ENCODE measurements at regions of chr12 and their contacts with region 1.

Region 1: DNA sequence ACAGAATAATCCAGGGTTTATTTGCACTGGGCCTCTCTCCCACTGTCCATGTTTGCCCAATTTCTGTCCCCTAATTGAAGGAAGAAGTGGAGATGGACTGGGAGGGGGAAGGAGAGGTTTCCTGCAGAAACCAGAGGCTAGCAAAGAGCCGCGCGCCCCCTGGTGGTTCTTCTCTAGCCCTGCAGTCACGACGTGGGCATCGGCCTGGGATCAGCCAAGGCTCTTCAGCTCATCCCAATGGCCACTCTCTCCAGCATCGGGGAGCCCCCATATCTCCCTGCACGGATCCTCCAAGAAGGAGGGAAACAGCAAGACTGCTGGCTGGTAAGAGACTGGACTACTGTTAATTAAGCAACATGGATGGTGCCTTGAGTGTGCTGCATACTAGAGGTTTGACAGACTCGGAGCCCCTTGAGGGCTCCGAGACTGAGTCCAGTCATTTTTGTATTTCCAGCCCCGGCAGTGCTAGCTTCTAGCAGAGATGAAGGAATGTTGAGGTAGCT is 18.7 kb downstream of the ZBTB39 start:
- DNase-seq: peak; percentile 55 to 91 (median 78)
- ATAC-seq: peak; percentile 85 to 97 (median 94)
- H3K4me3 ChIP-seq: no peak overlapping the region
- H3K27ac ChIP-seq: no peak overlapping the region
- H3K4me1 ChIP-seq: no peaks in the 10 kb centered on the region
- H3K27me3 ChIP-seq: no peaks in the 10 kb centered on the region
- CTCF ChIP-seq: peak; percentile 79 to 93 (median 92)

Region 2: DNA sequence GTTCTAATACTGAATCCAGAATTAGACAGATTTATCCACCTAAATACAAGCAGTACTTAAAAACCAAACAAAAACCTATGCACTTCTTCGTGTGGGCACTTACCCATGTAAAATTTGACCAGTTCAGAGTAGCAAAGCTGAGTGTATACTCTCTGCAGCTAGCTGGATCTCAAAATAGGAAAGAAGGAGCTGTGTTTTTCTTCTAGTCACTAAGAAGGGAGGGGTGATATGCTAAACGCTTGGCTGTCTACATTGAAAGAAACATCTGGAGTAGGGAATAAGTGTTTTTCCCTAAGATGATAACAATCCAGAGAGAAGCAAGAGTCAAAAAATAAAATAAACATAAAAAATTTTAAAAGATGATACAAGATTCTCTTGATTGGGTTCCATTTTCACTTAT is 446.0 kb before region 1 on chr12:
- intact Hi-C with region 1: no loop called
- DNase-seq: no peak
- ATAC-seq: no peak
- H3K4me3 ChIP-seq: no peak overlapping the region
- H3K27ac ChIP-seq: no peak overlapping the region
- H3K4me1 ChIP-seq: no peaks in the 10 kb centered on the region
- H3K27me3 ChIP-seq: no peaks in the 10 kb centered on the region
- CTCF ChIP-seq: no peak

Region 3: GRCh38 chr12:56759263-56759908 is 228.2 kb before region 1 on chr12:
- intact Hi-C with region 1: loop called in 2 of 3 experiments (anchors 5 kb)
- DNase-seq: no peak
- ATAC-seq: peak in 1 of 4 donors; percentile 31
- H3K4me3 ChIP-seq: no peak overlapping the region
- H3K27ac ChIP-seq: no peak overlapping the region
- H3K4me1 ChIP-seq: peaks cover 0 to 4% (median 0%) of the 10 kb centered on the region in 3 donors
- H3K27me3 ChIP-seq: no peaks in the 10 kb centered on the region
- CTCF ChIP-seq: no peak

Region 4: DNA sequence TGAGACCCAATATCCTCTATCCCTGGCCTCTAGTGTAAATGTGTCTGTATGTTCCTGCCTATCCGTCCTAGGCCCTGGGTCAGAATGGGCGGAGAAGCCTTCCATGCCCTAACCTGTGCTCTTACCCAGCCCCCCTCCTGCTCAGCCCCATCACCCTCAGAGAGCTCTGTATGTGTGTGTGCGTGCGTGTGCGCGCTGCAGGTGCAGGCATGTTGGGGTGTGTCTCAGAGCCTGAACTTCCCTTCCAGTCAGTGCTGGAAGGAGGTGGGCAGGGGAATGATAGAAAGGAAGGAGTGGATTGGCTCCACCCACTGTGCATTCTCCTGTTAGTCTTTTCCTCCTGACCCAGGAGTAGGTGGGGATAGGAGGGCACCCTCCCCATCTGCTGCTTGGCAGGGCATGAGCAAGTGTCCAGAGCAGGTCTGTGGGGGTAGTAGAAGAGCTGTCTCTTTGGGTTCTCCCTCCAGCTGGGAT is 108.5 kb after region 1 on chr12:
- intact Hi-C with region 1: no loop called
- DNase-seq: no peak
- ATAC-seq: no peak
- H3K4me3 ChIP-seq: no peak overlapping the region
- H3K27ac ChIP-seq: no peak overlapping the region
- H3K4me1 ChIP-seq: no peaks in the 10 kb centered on the region
- H3K27me3 ChIP-seq: no peaks in the 10 kb centered on the region
- CTCF ChIP-seq: no peak